Prostate gland (tissue), 2 donors: ENCODE measurements at regions of chr7 and their contacts with region 1.

Region 1: GRCh38 chr7:106425017-106425719 is 140.4 kb upstream of the NAMPT start:
- DNase-seq: peak; percentile 89
- H3K4me3 ChIP-seq: no peak overlapping the region
- H3K27ac ChIP-seq: peak overlapping the region; percentile 52 to 58
- H3K4me1 ChIP-seq: peaks cover 5% of the 10 kb centered on the region
- H3K27me3 ChIP-seq: no peaks in the 10 kb centered on the region
- CTCF ChIP-seq: no peak
- POLR2A ChIP-seq: peak; percentile 20

Region 2: GRCh38 chr7:106216517-106216922 is 208.6 kb before region 1 on chr7:
- intact Hi-C with region 1: loop called (anchors 5 kb)
- DNase-seq: peak; percentile 70
- H3K4me3 ChIP-seq: peak overlapping the region in 1 of 2 donors; percentile 17
- H3K27ac ChIP-seq: peak overlapping the region; percentile 89 to 93
- H3K4me1 ChIP-seq: peaks cover 11% of the 10 kb centered on the region
- H3K27me3 ChIP-seq: no peaks in the 10 kb centered on the region
- CTCF ChIP-seq: no peak
- POLR2A ChIP-seq: no peak

Region 3: GRCh38 chr7:106461993-106462859 is 37.1 kb after region 1 on chr7:
- intact Hi-C with region 1: no loop called
- DNase-seq: no peak
- H3K4me3 ChIP-seq: no peak overlapping the region
- H3K27ac ChIP-seq: no peak overlapping the region
- H3K4me1 ChIP-seq: no peaks in the 10 kb centered on the region
- H3K27me3 ChIP-seq: no peaks in the 10 kb centered on the region
- CTCF ChIP-seq: peak; percentile 39 to 87 (median 76)
- POLR2A ChIP-seq: no peak